OCI-LY7 (cell line): ENCODE measurements at regions of chr1 and their contacts with region 1.

Region 1: GRCh38 chr1:100866041-100866900 is 28.4 kb downstream of the EXTL2 start:
- DNase-seq: peak; percentile 42
- H3K4me3 ChIP-seq: no peak overlapping the region
- H3K27ac ChIP-seq: no peak overlapping the region
- H3K4me1 ChIP-seq: no peaks in the 10 kb centered on the region
- CTCF ChIP-seq: peak; percentile 83

Region 2: DNA sequence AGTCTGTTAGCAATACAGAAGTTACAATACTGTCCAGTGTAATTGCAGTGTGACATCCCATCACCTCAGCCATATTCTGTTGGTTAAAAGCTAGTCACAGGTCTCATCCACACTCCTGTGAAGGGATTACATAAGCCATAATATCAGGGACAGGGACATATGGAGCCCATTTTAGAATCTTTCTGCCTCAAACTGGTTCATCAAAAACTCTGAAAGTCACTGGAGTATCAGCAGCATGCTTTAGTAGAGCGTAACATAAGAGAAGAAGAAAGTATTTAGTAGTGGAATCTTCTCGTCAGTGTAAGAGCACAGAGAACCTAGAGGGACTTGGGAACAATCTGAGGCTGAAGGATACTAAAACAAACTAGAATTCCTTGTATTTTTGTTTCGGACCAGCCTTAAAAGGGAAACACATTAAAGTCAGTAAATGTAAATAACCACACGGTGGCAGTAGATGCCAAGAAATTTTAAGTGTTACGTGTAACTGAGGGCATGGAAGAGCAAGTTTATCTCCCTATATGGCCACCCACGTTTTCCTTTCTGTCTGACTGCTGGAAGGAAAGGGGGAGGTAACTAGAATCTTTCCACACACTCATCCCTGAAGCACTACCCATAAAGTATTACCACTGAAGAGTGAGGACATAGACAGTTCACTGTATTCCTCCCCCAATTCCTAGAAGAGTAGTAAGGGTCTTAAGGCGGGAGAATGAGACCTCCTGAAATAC is 1057.7 kb before region 1 on chr1:
- CTCF ChIA-PET with region 1: no interaction called
- POLR2A ChIA-PET with region 1: no interaction called
- intact Hi-C with region 1: loop called (anchors 2 kb)
- DNase-seq: peak; percentile 84
- H3K4me3 ChIP-seq: no peak overlapping the region
- H3K27ac ChIP-seq: no peak overlapping the region
- H3K4me1 ChIP-seq: peaks cover 5% of the 10 kb centered on the region
- CTCF ChIP-seq: peak; percentile 87

Region 3: DNA sequence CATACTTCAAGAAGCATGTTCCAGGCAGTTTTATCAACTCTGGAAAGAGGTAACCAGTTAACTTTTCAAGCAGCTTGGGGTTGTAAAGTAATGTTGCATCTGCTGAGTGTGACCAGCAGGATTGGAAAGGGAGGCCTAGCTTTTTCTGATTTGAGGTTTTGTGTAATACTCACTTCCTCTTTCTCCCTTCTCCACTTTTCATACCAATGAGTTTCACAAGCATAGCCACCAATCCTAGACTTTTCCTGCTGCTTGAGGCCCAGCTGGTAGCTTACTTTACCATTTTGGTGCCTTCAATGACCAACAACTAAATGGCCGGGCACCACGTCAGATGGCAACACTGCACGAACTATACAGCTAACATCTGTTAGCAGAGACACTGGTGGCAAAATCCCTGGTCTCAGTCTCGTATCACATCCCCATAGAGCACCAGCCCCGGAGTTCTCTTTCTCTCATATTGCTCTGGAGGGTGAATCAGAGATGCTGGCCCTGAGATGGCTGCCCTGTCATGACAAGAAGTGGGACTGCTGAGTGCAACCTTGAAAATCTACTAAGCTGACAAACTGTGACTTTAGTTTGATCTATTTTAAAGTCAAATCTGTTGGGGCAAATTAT is 343.1 kb before region 1 on chr1:
- CTCF ChIA-PET with region 1: no interaction called
- POLR2A ChIA-PET with region 1: no interaction called
- intact Hi-C with region 1: loop called (anchors 10 kb)
- DNase-seq: peak; percentile 46
- H3K4me3 ChIP-seq: no peak overlapping the region
- H3K27ac ChIP-seq: no peak overlapping the region
- H3K4me1 ChIP-seq: peaks cover 11% of the 10 kb centered on the region
- CTCF ChIP-seq: no peak

Region 4: GRCh38 chr1:101081496-101082488 is 215.5 kb after region 1 on chr1:
- CTCF ChIA-PET with region 1: no interaction called
- POLR2A ChIA-PET with region 1: no interaction called
- intact Hi-C with region 1: no loop called
- DNase-seq: no peak
- H3K4me3 ChIP-seq: no peak overlapping the region
- H3K27ac ChIP-seq: no peak overlapping the region
- H3K4me1 ChIP-seq: no peaks in the 10 kb centered on the region
- CTCF ChIP-seq: no peak